Stomach (tissue), 19 donors: ENCODE measurements at regions of chr2 and their contacts with region 1.

Region 1: GRCh38 chr2:177552422-177553175 is 160.0 kb downstream of the AGPS start:
- DNase-seq: peak; percentile 86 to 97
- H3K4me3 ChIP-seq: peak overlapping the region; percentile 59 to 76 (median 69)
- H3K27ac ChIP-seq: peak overlapping the region; percentile 93 to 99 (median 95)
- H3K4me1 ChIP-seq: peaks cover 3 to 13% (median 12%) of the 10 kb centered on the region in 4 donors
- H3K27me3 ChIP-seq: no peaks in the 10 kb centered on the region
- CTCF ChIP-seq: peak in 1 of 7 experiments; percentile 13
- EP300 ChIP-seq: no peak
- POLR2A ChIP-seq: no peak

Region 2: DNA sequence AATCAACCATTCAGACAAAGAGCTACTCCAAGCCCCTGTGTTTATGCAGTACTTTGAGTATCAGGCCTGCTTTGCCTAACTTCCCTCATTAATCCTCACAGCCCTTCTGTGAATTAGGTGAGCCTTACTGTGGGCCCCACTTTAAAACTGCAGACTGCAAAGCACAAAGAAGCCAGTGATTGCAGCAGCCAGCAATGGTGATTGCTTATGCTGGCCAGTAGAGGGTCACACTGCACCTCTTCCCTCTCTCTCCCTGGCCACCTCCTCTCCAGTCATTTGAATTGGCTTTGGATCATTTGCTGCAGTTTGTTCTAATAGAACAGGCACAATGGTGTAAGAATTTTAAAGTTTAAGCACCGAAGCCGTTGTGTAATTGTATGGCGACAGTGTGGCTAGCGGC is 69.9 kb after region 1 on chr2:
- intact Hi-C with region 1: loop called (anchors 10 kb)
- DNase-seq: no peak
- H3K4me3 ChIP-seq: no peak overlapping the region
- H3K27ac ChIP-seq: no peak overlapping the region
- H3K4me1 ChIP-seq: peaks cover 0 to 13% (median 9%) of the 10 kb centered on the region in 4 donors
- H3K27me3 ChIP-seq: peaks cover 0 to 13% (median 0%) of the 10 kb centered on the region in 3 donors
- CTCF ChIP-seq: no peak
- EP300 ChIP-seq: no peak
- POLR2A ChIP-seq: no peak

Region 3: GRCh38 chr2:178128836-178129630 is 576.4 kb after region 1 on chr2:
- intact Hi-C with region 1: no loop called
- DNase-seq: no peak
- H3K4me3 ChIP-seq: no peak overlapping the region
- H3K27ac ChIP-seq: no peak overlapping the region
- H3K4me1 ChIP-seq: no peaks in the 10 kb centered on the region
- H3K27me3 ChIP-seq: no peaks in the 10 kb centered on the region
- CTCF ChIP-seq: no peak
- EP300 ChIP-seq: no peak
- POLR2A ChIP-seq: no peak